ENCODE measurements at regions of chr1 and their contacts with region 1.

Region 1: DNA sequence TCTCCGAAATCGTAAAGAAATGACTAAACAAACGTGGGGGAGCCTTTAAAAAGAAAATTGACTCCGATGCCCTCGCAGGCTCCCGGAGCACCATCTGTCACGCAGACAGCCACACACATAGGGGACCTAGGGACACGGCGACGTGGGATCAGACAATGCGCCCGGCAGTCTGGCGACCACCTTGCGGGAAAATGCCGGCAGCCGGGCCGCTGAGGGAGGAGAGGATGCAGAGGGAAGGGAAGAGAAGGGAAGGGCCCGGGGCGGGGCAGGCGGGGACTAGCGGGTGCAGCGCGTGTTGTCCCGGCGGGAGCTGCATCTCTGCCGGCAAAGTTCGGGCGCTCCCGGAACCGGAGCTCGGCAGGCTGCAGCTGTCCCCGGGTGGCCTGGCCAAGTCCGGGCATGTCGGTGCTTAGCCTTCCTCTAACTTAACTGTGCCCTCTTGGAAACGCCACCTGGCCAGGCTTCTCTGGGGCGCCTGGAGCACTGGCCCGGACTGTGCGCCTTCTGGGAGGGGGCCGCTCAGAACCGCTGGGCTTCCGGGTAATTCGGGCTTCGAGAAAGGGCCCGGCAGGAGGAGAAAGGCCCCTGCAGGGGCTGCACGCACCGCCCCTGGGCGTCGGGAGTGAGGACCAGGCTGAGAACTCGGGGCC is 1.8 kb downstream of the NHLH2 start:
- DNase-seq: peak; percentile 72
- H3K27ac ChIP-seq: peak overlapping the region; percentile 89
- CTCF ChIP-seq: no peak

Region 2: GRCh38 chr1:115727706-115728249 is 111.4 kb before region 1 on chr1:
- CTCF ChIA-PET with region 1: no interaction called
- POLR2A ChIA-PET with region 1: no interaction called
- DNase-seq: no peak
- H3K27ac ChIP-seq: no peak overlapping the region
- CTCF ChIP-seq: no peak

Region 3: GRCh38 chr1:115854005-115854404 is 14.9 kb after region 1 on chr1:
- CTCF ChIA-PET with region 1: no interaction called
- POLR2A ChIA-PET with region 1: no interaction called
- DNase-seq: no peak
- H3K27ac ChIP-seq: no peak overlapping the region
- CTCF ChIP-seq: no peak

Region 4: GRCh38 chr1:115900856-115901255 is 61.7 kb after region 1 on chr1:
- CTCF ChIA-PET with region 1: no interaction called
- POLR2A ChIA-PET with region 1: no interaction called
- DNase-seq: no peak
- H3K27ac ChIP-seq: no peak overlapping the region
- CTCF ChIP-seq: no peak

Region 5: DNA sequence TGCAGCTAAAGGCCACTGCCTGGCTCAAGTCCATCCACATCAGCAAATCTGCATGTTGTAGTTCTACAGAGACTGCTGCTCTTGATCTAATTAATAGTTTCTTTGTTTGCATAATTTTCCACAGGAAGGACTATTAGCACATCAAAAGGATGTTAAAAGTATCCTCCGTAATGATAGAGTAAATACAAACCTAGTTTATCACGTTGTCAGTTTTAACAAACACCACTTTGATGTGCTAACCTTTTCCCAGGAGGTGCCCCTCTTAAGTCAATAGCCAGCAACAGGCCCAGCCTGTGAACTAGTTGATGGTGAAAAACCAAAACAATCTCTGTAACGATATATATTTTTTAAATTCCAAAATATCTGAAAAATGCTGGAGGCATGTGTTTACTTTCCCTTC is 73.0 kb after region 1 on chr1:
- CTCF ChIA-PET with region 1: no interaction called
- POLR2A ChIA-PET with region 1: interaction called, 13 read pairs
- DNase-seq: no peak
- H3K27ac ChIP-seq: no peak overlapping the region
- CTCF ChIP-seq: no peak

Measured in RWPE1 (cell line).